Testis (tissue), 5 donors: ENCODE measurements at regions of chr3 and their contacts with region 1.

Region 1: DNA sequence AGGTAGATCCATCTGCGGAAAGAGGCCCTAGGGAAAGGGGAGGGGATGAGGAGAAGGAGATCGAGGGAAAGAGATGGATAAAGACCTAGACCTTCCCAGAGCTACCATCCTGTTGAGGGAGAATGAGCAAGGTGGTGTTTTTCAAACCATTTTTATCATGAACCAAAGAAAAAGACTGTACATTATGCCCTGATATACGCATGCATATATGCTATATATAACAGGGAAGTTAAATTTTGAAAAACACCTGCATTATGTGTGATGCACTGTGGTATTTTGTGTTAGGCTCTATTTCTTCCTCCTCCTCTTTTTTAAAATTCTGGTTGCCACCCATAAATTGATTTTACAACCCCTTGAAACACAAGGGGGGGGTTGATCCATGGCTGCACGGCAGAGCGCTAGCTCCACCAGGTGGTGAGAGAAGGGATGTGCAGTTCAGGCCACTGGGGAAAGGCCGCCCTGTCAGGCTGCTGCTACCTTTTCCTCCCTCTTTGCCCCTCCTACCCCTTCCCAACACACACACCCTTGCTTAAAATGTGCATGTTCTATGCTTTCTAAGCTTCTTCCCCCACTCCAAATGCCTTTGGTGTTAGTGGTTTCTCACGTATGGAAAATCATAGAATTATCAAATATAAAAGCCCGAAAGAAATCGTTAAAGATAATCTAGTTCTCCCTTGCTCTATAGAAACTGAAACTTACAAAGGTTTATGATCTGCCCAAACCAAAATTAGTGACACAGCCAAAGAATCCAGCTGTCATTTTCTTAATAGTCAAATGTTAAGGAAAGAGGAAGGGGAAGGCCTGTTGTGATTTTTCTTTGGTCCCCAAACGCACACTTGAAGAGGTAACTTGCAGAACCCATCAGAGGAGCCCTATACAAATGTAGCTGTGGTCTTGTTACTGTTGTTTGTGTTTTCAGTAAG is 262.0 kb upstream of the UMPS start:
- DNase-seq: peak; percentile 66
- H3K4me3 ChIP-seq: no peak overlapping the region
- H3K27ac ChIP-seq: no peak overlapping the region
- H3K4me1 ChIP-seq: no peaks in the 10 kb centered on the region
- H3K27me3 ChIP-seq: no peaks in the 10 kb centered on the region
- CTCF ChIP-seq: peak; percentile 80 to 94 (median 81)
- POLR2A ChIP-seq: no peak

Region 2: DNA sequence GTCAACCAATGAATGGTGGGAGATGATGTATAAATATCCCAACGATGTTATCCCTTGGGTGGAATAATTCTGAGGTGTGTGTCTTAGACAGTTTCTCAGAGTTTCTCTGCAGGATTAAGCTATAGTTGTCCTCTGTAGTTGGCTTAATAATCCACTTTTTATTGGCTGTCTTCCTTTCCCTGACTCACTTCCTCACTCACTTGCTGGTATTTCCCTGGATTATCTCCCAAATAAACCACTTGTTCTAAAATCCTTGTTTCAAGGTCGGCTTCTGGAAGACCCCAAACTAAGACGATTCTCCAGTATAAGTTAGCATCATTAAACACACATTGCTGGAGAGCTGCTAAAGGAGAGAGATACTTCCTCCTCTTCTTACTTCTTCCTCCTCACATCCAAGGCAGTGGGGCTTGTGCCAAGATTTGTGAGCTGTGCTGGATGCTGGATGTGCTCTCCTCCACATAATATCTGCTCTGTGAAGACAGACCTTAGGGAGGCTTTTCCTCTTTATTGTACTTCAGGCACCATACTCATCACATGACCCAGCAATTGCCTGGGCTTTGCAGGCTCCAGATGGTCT is 453.8 kb before region 1 on chr3:
- intact Hi-C with region 1: loop called (anchors 10 kb)
- DNase-seq: no peak
- H3K4me3 ChIP-seq: no peak overlapping the region
- H3K27ac ChIP-seq: no peak overlapping the region
- H3K4me1 ChIP-seq: no peaks in the 10 kb centered on the region
- H3K27me3 ChIP-seq: no peaks in the 10 kb centered on the region
- CTCF ChIP-seq: no peak
- POLR2A ChIP-seq: no peak

Region 3: DNA sequence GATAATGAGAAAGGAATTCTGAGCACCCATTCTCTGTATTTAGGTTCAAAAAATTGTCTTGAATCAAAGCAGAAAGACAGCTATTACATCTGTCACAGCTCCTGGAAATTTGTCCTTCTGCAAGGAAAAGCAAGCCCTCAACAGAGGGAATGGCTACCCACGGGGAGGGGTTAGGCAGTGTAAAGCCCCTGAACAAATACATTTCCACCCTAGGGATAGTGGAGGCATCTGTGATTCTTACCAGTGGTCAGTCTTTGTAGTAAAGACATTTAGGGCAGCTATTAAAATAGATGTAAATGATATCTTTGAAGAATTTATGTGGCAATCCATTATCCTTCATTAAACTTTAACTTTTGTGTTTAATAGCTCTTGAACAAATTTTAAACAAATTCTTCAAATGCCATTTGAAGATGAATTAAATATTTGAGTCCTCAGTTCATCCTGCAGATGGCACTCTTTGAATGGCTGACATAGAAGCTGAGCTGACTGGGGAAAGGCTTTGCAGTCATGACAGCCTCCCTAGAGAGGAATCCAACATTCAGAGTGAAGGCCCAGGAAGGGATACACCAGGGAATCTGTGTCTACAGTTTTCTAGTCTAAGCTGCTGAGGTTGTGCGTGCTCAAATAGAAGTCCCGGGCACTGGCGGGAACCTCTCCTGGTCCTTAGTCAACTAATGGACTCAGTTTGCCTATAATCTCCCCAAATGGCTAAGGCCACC is 116.7 kb before region 1 on chr3:
- intact Hi-C with region 1: loop called (anchors 10 kb)
- DNase-seq: peak; percentile 63
- H3K4me3 ChIP-seq: no peak overlapping the region
- H3K27ac ChIP-seq: no peak overlapping the region
- H3K4me1 ChIP-seq: peaks cover 7% of the 10 kb centered on the region
- H3K27me3 ChIP-seq: no peaks in the 10 kb centered on the region
- CTCF ChIP-seq: peak; percentile 50 to 70 (median 67)
- POLR2A ChIP-seq: no peak

Region 4: GRCh38 chr3:124584552-124585391 is 116.5 kb after region 1 on chr3:
- intact Hi-C with region 1: no loop called
- DNase-seq: peak; percentile 74
- H3K4me3 ChIP-seq: peak overlapping the region; percentile 19 to 43
- H3K27ac ChIP-seq: no peak overlapping the region
- H3K4me1 ChIP-seq: peaks cover 8% of the 10 kb centered on the region
- H3K27me3 ChIP-seq: no peaks in the 10 kb centered on the region
- CTCF ChIP-seq: no peak
- POLR2A ChIP-seq: no peak